ENCODE measurements at regions of chr4 and their contacts with region 1.

Region 1: DNA sequence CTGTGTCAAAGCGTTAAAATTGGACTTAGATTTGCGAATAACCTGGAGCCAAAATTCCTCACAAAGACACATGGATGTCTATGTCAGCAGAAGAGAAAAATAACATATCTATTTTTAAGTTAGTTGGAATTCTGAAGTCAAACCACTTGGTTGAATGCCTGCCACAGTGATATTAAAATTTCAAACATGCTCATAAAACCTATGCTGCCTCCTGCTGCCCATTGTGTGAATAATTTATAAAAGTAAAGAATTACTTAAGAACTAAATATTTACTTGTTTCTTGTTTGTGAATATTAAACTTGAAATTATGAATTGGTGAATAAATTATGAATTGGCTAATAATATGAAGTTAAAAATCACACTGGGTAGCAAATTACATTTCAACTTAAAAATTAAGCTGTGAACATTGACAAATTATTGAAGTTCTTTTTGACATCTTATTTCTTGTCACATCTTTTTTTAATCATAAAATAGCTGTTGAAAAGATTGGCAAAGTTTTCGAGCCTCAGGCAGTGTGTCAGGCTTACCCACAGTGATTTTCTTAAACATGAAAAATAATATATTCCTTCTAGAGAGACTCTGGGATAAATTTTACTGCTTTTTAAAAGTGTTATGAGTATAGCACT is 35.4 kb downstream of the FABP2 start:
- DNase-seq: peak in 1 of 2 donors; percentile 53
- ATAC-seq: peak in 7 of 8 donors; percentile 39 to 78 (median 63)
- H3K4me3 ChIP-seq: no peak overlapping the region
- H3K27ac ChIP-seq: peak overlapping the region in 7 of 10 donors; percentile 10 to 75 (median 59)
- H3K4me1 ChIP-seq: peaks cover 0 to 51% (median 33%) of the 10 kb centered on the region in 9 donors
- H3K27me3 ChIP-seq: no peaks in the 10 kb centered on the region
- CTCF ChIP-seq: peak; percentile 30 to 81 (median 71)

Region 2: GRCh38 chr4:118772081-118772766 is 514.3 kb before region 1 on chr4:
- intact Hi-C with region 1: loop called in 1 of 10 experiments (anchors 10 kb)
- DNase-seq: no peak
- ATAC-seq: peak; percentile 63 to 89 (median 80)
- H3K4me3 ChIP-seq: peak overlapping the region in 5 of 10 donors; percentile 13 to 25 (median 23)
- H3K27ac ChIP-seq: peak overlapping the region; percentile 6 to 81 (median 55)
- H3K4me1 ChIP-seq: peaks cover 5 to 85% (median 67%) of the 10 kb centered on the region in 9 donors
- H3K27me3 ChIP-seq: no peaks in the 10 kb centered on the region
- CTCF ChIP-seq: peak; percentile 28 to 78 (median 64)

Region 3: DNA sequence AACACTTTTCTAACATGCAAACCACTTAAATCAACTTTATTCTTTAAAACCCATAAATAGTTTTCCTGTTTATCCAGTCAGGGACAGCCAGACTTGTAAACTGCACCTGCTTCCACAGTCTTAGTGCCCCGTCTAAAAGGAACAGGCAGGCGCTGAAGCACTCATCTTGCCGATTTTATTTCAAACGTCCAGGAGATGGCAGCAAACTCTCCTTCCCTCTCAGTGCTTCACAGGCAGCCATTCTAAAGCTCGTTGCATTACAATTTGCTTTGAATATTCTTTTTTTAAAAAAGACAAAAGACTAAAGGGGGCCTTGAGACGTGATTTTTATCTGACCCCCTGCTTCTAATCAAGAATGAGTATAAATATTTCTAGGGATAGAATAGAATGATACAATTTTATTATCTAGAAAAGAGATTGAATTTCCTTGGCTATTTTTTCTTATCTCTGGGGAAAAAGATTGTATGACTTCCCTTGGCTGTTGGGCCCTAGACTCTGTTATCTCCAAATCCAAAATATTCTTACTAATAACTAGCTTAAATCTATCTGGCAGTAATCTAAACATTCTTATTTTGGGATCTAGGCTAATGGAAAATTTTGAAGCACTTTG is 244.4 kb before region 1 on chr4:
- intact Hi-C with region 1: loop called in 9 of 10 experiments (anchors 1 to 10 kb)
- DNase-seq: peak in 1 of 2 donors; percentile 71
- ATAC-seq: peak; percentile 49 to 80 (median 64)
- H3K4me3 ChIP-seq: no peak overlapping the region
- H3K27ac ChIP-seq: peak overlapping the region in 8 of 10 donors; percentile 51 to 72 (median 63)
- H3K4me1 ChIP-seq: peaks cover 5 to 91% (median 75%) of the 10 kb centered on the region in 9 donors
- H3K27me3 ChIP-seq: no peaks in the 10 kb centered on the region
- CTCF ChIP-seq: peak; percentile 47 to 82 (median 66)

Region 4: DNA sequence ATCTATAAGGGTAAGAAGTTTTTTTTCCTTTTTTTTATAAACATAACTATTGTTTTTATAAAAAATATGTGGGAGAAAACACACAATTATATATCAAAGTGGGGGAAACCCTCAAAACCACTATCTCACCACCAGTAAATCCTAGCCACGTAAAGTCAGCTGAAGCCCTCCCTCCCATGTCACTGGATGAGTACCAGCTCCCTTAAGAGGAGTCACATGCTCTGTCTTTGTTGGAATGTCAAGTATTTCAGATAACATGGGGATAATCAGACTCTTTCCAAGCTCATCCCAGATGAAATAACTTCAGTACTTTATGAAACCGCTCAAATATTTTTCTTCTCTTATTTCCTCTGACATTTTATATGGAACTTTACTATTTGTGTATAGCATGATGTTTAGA is 148.4 kb before region 1 on chr4:
- intact Hi-C with region 1: loop called in 1 of 10 experiments (anchors 10 kb)
- DNase-seq: no peak
- ATAC-seq: peak in 6 of 8 donors; percentile 35 to 76 (median 70)
- H3K4me3 ChIP-seq: peak overlapping the region; percentile 11 to 60 (median 47)
- H3K27ac ChIP-seq: peak overlapping the region in 9 of 10 donors; percentile 75 to 93 (median 87)
- H3K4me1 ChIP-seq: peaks cover 0 to 29% (median 16%) of the 10 kb centered on the region in 9 donors
- H3K27me3 ChIP-seq: no peaks in the 10 kb centered on the region
- CTCF ChIP-seq: no peak

Region 5: GRCh38 chr4:119218093-119218492 is 68.4 kb before region 1 on chr4:
- intact Hi-C with region 1: loop called in 5 of 10 experiments (anchors 5 to 10 kb)
- DNase-seq: no peak
- ATAC-seq: no peak
- H3K4me3 ChIP-seq: no peak overlapping the region
- H3K27ac ChIP-seq: no peak overlapping the region
- H3K4me1 ChIP-seq: peaks cover 0 to 52% (median 19%) of the 10 kb centered on the region in 9 donors
- H3K27me3 ChIP-seq: no peaks in the 10 kb centered on the region
- CTCF ChIP-seq: no peak

Region 6: DNA sequence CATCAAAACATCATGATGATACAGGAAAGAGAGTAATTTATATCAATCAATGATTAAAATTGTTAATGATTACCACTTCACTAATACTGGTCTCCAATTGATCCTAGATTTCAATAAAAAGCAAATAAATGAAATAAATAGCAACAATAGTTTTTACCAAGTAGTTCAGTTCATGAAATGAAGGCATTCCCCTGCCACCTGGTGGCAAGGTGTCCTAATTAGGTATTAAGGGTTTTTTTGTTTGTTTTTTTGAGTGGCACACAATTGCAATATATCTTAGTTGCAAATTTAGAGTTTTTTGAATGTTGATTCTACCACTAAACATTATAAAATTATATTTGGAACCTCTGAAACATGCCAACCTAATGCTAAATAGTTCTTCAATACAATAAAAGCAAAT is 499.5 kb after region 1 on chr4:
- intact Hi-C with region 1: no loop called
- DNase-seq: no peak
- ATAC-seq: no peak
- H3K4me3 ChIP-seq: no peak overlapping the region
- H3K27ac ChIP-seq: no peak overlapping the region
- H3K4me1 ChIP-seq: peaks cover 0 to 4% (median 0%) of the 10 kb centered on the region in 9 donors
- H3K27me3 ChIP-seq: no peaks in the 10 kb centered on the region
- CTCF ChIP-seq: peak in 7 of 9 donors; percentile 16 to 60 (median 45)